Activated CD4-positive, alpha-beta memory T cell treated with anti-CD3 and anti-CD28 coated beads for 36 hours (primary cell): ENCODE measurements at regions of chr5 and their contacts with region 1.

Region 1: GRCh38 chr5:180810210-180810958 is 7.8 kb upstream of the MGAT1 start:
- DNase-seq: peak; percentile 97
- H3K4me3 Mint-ChIP-seq: peak overlapping the region; percentile 94
- H3K27ac Mint-ChIP-seq: peak overlapping the region; percentile 99
- H3K4me1 Mint-ChIP-seq: peaks cover 69% of the 10 kb centered on the region
- H3K27me3 Mint-ChIP-seq: no peaks in the 10 kb centered on the region

Region 2: DNA sequence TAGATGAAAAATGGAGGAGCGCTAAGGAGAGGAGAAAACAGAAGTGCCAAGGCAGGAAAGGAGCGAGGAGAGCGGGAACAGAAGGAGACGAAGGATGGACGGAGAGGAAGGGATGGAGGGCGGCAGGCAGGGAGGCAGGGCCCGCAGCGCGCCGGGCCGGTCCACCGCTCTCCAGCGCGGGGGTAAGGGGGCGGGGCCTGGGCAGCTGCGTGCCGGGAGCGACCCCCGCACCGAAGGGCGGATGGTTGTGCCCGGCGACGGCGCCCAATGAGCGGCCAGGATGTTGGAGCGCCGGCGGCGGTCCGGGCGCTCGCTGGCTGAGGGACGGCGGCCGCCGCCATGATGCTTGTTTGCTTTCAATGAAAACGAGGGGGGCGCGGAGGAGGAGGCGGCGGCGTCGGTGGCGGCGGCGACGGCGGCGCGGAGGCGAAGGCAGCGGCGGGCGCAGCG is 316.3 kb before region 1 on chr5 and contains the start of gene CNOT6:
- CTCF ChIA-PET with region 1: no interaction called
- POLR2A ChIA-PET with region 1: no interaction called
- intact Hi-C with region 1: loop called (anchors 10 kb)
- DNase-seq: peak; percentile 95
- H3K4me3 Mint-ChIP-seq: peak within 1 kb of the TSS; percentile 84
- H3K27ac Mint-ChIP-seq: peak within 1 kb of the TSS; percentile 82
- H3K4me1 Mint-ChIP-seq: peaks cover 32% of the 10 kb centered on the region
- H3K27me3 Mint-ChIP-seq: no peaks in the 10 kb centered on the region
- total RNA-seq, gene CNOT6: 32.0 to 35.2 TPM

Region 3: DNA sequence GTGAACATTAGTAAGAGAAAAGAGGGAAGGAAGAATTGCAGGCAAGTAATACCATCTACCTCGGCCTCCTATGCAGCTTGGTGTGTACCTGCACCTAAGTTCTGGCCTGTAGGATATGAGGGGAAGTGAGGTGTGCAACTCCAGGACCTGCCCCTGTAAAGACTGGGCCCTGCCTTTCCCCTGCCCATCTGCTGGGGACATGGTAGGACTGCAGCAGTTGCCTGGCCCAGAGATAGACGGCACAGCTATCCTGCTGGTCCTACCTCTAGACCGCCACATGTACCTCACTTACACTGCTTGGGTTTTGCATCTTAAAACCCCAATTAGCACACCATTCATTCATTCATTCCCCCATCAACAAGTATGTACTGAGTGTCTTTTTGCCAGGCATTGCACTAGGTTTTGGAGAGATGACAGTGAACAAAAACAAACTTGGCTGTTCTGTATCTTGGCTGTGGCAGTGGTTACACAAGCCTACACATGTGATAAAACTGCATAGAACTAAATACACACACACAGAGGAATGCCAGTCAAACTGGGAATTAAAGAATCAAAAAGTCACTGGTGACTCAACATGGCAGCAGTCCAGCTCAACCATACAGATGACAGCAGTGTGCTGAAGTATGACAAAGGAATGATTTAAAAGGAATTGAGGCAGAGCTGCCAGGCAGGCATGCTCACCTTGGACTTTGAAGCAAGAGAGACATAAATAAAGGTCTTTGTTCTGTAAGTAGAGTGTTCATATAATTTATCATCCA is 15.6 kb after region 1 on chr5:
- CTCF ChIA-PET with region 1: interaction called, 24 read pairs
- POLR2A ChIA-PET with region 1: interaction called, 38 read pairs
- intact Hi-C with region 1: loop called (anchors 1 kb)
- DNase-seq: peak; percentile 79
- H3K4me3 Mint-ChIP-seq: no peak overlapping the region
- H3K27ac Mint-ChIP-seq: peak overlapping the region; percentile 64
- H3K4me1 Mint-ChIP-seq: peaks cover 34% of the 10 kb centered on the region
- H3K27me3 Mint-ChIP-seq: no peaks in the 10 kb centered on the region

Region 4: DNA sequence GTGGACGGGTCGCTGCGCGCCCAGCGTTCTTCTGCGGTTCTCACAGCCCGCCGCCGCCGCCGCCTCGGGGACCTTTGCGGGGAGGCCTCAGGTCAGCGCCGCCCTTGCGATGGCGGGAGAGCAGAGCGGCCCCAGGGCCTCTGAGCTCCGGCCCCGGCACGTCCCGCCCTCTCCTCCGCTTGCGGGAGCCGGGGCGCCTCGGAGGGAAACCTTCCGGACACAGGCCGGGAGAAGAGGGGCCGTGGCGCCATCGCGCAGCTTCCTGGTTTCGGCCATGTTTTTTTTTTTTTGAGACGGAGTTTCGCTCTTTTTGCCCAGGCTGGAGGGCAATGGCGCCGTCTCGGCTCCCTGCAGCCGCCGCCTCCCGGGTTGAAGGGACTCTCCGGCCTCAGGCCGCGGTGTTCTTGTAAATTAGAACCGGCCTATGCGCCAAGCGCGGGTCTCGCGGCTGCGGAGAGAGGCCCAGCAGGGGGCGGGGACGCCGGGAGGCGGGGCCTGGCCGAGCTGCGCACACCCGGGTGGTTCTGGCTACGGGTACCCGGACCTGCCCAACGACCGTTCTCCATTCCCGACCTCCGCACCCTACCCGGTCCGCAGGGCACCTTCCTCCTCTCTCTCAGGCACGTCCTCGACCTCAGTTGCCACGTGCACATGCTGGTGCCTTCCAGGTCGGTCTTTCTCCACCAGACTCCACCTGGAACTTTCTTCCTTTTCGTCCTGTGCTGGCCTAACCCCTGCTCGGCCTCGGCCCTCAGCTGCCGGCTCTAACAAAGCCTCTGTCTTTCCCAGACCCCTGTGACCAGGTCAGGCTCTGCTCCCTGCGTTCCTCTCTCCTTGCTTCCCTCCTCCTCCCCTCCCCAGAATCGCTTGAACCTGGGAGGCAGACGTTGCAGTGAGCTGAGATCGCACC is 21.0 kb after region 1 on chr5:
- CTCF ChIA-PET with region 1: interaction called, 24 read pairs
- POLR2A ChIA-PET with region 1: interaction called, 38 read pairs
- intact Hi-C with region 1: loop called (anchors 1 kb)
- DNase-seq: peak; percentile 86
- H3K4me3 Mint-ChIP-seq: peak overlapping the region; percentile 99
- H3K27ac Mint-ChIP-seq: peak overlapping the region; percentile 99
- H3K4me1 Mint-ChIP-seq: peaks cover 39% of the 10 kb centered on the region
- H3K27me3 Mint-ChIP-seq: no peaks in the 10 kb centered on the region

Region 5: DNA sequence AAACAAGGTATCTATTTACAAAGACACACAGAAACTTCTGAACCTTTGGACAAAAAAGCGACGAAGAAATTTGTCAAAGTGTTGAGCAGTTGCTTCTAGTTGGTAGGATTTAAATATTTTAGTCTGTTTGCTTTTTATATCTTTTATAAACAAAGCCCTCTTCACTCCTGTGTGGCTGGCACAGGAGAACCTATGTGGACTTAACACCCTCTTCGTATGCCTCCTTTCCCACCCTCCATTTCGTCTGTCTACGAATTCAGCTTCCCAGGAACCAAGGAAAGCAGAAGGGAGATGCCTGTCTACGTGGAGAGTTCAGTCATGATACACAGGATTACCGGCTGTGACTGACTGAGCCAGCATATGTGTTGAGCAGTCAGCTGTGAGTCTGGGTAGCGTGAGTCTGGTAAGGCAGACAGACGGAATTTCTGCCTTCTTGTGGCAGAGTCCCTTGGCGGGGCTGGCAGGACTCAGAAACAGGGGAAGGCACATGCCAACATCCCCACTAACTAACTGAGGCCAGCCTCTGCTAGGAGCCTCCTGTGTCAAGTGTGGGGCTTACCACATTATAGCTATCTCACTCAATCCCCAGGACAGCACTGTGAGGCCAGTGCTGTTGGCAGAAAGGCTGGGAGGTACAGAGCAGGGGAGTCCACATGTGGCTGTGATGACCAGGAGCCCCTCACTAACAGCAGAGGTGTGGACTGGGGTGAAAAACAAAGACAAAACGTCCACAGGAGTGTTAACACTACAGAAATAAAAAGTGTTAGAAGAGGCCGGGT is 64.6 kb after region 1 on chr5:
- CTCF ChIA-PET with region 1: no interaction called
- POLR2A ChIA-PET with region 1: no interaction called
- intact Hi-C with region 1: no loop called
- DNase-seq: no peak
- H3K4me3 Mint-ChIP-seq: no peak overlapping the region
- H3K27ac Mint-ChIP-seq: no peak overlapping the region
- H3K4me1 Mint-ChIP-seq: peaks cover 2% of the 10 kb centered on the region
- H3K27me3 Mint-ChIP-seq: no peaks in the 10 kb centered on the region

Region 6: GRCh38 chr5:181149353-181149752 is 339.0 kb after region 1 on chr5:
- CTCF ChIA-PET with region 1: no interaction called
- POLR2A ChIA-PET with region 1: no interaction called
- intact Hi-C with region 1: no loop called
- DNase-seq: no peak
- H3K4me3 Mint-ChIP-seq: no peak overlapping the region
- H3K27ac Mint-ChIP-seq: no peak overlapping the region
- H3K4me1 Mint-ChIP-seq: peaks cover 9% of the 10 kb centered on the region
- H3K27me3 Mint-ChIP-seq: peaks cover 40% of the 10 kb centered on the region

Region 7: DNA sequence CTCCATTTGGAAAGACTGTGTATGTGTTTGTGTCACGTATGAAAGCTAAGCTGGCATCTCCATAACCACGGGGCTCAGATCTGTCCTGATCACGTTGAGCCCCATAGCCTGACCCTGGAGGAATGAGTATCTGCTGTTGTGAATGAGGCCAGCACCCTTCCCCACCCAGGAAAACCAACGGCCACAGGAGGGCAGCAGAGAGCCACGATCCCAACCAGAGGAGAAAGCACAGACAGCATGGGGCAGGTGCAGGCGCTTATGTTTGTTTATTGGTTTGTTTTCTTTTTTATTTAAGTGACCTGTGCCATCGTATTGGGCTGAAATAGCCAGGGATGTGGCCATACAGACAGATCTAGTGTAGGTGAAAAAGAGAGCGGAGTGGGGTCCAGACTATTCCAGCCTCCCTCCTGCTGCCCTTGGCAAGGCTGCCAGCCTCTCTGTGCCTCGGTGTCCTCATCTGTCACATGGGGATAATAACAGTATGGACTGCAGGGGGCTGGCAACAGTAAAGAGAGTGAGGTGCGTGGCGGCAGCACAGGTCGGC is 349.0 kb after region 1 on chr5:
- CTCF ChIA-PET with region 1: no interaction called
- POLR2A ChIA-PET with region 1: no interaction called
- intact Hi-C with region 1: loop called (anchors 2 kb)
- DNase-seq: peak; percentile 96
- H3K4me3 Mint-ChIP-seq: peak overlapping the region; percentile 36
- H3K27ac Mint-ChIP-seq: peak overlapping the region; percentile 72
- H3K4me1 Mint-ChIP-seq: peaks cover 33% of the 10 kb centered on the region
- H3K27me3 Mint-ChIP-seq: peaks cover 17% of the 10 kb centered on the region